Activated T-helper 2 cell treated with anti-CD3 and anti-CD28 coated beads, Interferon-gamma antibody, Interleukin-2, Interleukin-4, amounts not matched to agents 10 μg/mL and 5 μg/mL and 100 μg/mL, durations not matched to agents 14 hours and 24 hours and 36 hours (primary cell): ENCODE measurements at regions of chr18 and their contacts with region 1.

Region 1: DNA sequence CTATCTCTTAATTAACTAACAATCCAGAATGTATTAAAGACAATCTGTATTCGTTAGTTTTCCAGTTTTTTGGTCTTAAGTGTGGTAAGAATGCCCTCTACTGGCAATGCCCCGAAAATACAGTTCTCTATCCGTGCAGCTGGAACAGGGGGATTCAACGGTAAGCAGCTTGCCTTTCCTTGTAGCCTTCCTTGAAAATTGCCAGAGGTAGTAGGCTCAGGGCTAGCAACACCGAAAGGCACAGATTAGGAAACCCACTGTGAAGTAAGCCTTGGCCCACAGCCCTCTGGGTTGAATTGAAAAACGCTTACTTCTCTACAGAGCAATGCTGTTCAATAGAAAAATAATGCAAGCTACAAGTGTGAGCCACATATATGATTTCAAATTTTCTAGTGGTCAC is 17.1 kb upstream of the VPS4B start:
- DNase-seq: no peak
- H3K4me3 Mint-ChIP-seq: no peak overlapping the region
- H3K27ac Mint-ChIP-seq: no peak overlapping the region
- H3K4me1 Mint-ChIP-seq: peaks cover 4% of the 10 kb centered on the region
- H3K27me3 Mint-ChIP-seq: peaks cover 23% of the 10 kb centered on the region

Region 2: DNA sequence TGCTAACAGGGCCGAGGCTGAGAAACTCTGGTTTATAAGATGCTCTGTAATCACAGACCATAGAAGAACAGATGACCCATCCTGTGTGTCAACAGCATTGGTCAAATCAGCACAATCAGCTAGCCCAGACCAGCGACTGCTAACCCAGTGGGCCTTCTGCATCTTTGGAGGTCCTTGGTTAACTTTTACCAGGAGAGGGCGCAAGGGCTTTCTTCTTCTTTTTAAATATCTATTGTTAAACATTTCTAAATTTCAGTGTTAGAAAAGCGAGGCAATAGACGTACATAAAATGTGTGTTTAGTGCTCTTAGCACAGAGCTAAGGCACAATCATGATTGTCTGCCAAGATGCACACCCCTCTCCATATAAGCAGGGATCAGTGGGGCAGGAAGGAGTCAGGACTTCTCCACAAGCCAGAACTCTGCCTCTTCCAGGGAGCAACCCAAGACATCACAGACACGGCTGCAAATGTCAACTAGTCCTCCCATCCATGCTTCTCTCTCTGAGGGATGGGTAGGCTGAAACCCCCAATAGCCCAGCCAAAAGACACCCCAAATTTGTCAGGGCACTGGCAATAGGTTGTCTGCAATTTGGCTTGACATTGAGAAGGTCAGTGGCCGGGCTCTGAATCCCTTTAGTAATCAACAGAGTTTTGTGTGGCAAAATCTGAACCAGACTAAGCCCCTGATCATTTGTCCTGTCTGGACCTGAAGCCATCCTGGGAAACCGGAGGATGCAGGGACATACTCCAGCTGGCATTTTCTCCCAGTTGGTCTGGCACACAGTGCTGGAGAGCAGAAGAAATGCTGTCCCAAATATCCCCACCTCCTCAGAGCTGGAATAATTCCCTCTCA is 308.0 kb before region 1 on chr18:
- intact Hi-C with region 1: loop called (anchors 10 kb)
- DNase-seq: no peak
- H3K4me3 Mint-ChIP-seq: no peak overlapping the region
- H3K27ac Mint-ChIP-seq: no peak overlapping the region
- H3K4me1 Mint-ChIP-seq: peaks cover 37% of the 10 kb centered on the region
- H3K27me3 Mint-ChIP-seq: no peaks in the 10 kb centered on the region

Region 3: GRCh38 chr18:63339920-63340484 is 99.3 kb before region 1 on chr18:
- intact Hi-C with region 1: loop called (anchors 1 kb)
- DNase-seq: no peak
- H3K4me3 Mint-ChIP-seq: no peak overlapping the region
- H3K27ac Mint-ChIP-seq: no peak overlapping the region
- H3K4me1 Mint-ChIP-seq: peaks cover 15% of the 10 kb centered on the region
- H3K27me3 Mint-ChIP-seq: no peaks in the 10 kb centered on the region

Region 4: DNA sequence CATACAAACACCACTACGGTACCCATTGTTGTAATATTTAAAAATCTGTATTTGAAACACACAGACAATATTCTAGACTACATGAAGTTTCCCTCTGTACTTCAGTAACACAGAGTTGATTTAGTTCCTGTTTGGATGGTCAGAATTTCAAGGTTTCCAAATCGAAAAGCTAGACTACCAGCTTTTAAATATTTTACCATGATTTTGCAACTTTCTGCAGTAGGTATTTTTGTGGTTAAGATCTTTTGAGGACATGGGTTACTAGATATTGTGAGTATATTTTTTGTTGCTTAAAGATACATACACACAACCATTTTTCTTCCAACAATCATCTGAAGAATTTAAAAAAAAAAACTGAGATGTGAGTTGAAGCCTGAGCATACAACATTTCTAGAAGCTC is 48.3 kb after region 1 on chr18:
- intact Hi-C with region 1: no loop called
- DNase-seq: no peak
- H3K4me3 Mint-ChIP-seq: no peak overlapping the region
- H3K27ac Mint-ChIP-seq: no peak overlapping the region
- H3K4me1 Mint-ChIP-seq: no peaks in the 10 kb centered on the region
- H3K27me3 Mint-ChIP-seq: peaks cover 25% of the 10 kb centered on the region

Region 5: GRCh38 chr18:63562284-63562683 is 123.0 kb after region 1 on chr18:
- intact Hi-C with region 1: no loop called
- DNase-seq: no peak
- H3K4me3 Mint-ChIP-seq: no peak overlapping the region
- H3K27ac Mint-ChIP-seq: no peak overlapping the region
- H3K4me1 Mint-ChIP-seq: no peaks in the 10 kb centered on the region
- H3K27me3 Mint-ChIP-seq: peaks cover 6% of the 10 kb centered on the region

Region 6: DNA sequence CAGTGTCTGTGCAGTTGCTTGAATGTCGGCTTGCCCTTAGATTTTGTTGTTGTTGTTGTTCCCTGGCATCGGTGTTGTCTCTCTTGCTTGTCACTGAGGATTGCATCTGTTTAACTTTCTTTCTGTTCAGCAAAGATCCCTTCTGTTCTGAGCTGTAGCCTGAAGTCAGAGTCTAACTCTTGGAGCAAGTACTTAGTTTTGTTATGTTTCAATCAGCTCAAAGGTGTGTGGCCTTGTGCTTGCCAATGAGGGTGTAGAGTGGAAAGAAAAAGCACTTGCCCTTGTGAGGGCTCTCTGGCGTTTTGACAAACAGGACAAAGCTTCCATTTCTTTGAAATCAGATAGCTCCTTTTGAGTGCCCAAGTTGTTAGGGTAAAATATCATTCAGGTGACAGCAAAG is 1554.4 kb after region 1 on chr18:
- intact Hi-C with region 1: no loop called
- DNase-seq: no peak
- H3K4me3 Mint-ChIP-seq: no peak overlapping the region
- H3K27ac Mint-ChIP-seq: no peak overlapping the region
- H3K4me1 Mint-ChIP-seq: no peaks in the 10 kb centered on the region
- H3K27me3 Mint-ChIP-seq: no peaks in the 10 kb centered on the region